Right ventricle myocardium inferior (tissue), 1 donor: ENCODE measurements at regions of chr5 and their contacts with region 1.

Region 1: GRCh38 chr5:149268928-149269557 is 2.6 kb upstream of the AFAP1L1 start:
- DNase-seq: no peak
- ATAC-seq: no peak

Region 2: DNA sequence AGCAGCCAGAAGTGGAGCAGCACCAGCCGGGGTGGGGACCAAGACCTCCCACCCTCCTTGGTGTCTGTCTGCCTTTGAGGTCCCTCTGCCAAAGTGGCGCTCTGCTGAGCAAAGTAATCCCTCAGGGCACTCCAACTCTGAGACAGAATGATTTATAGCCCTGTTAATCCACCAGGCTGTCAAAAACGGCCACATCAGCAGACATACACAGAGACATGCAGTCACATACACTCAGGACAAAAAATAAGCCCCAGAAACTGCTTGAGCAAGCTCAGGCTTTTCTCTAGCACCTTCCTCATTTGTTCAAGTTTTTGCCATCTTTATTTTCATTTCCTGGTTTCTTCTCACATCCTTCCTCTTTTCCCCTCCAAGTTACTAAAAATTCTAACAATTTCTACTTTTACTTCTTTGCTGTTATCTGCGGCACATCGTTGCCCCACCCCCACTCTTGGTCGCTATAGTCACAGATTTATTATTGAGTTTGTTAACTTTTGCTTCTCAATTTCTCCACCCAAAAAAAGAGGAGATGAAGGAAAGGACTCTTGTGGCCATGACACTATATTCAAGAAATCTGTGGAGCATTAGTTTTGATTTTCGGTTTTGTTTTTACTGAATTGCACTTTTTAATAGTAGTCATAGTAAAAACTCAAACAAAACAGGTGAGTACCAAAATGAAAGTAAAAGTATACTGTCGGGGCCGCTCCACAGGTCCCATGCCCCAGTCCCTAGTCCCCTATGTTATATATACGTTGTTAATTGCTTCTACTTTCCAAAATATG is 460.0 kb before region 1 on chr5:
- intact Hi-C with region 1: no loop called
- DNase-seq: peak; percentile 73
- ATAC-seq: peak; percentile 45

Region 3: DNA sequence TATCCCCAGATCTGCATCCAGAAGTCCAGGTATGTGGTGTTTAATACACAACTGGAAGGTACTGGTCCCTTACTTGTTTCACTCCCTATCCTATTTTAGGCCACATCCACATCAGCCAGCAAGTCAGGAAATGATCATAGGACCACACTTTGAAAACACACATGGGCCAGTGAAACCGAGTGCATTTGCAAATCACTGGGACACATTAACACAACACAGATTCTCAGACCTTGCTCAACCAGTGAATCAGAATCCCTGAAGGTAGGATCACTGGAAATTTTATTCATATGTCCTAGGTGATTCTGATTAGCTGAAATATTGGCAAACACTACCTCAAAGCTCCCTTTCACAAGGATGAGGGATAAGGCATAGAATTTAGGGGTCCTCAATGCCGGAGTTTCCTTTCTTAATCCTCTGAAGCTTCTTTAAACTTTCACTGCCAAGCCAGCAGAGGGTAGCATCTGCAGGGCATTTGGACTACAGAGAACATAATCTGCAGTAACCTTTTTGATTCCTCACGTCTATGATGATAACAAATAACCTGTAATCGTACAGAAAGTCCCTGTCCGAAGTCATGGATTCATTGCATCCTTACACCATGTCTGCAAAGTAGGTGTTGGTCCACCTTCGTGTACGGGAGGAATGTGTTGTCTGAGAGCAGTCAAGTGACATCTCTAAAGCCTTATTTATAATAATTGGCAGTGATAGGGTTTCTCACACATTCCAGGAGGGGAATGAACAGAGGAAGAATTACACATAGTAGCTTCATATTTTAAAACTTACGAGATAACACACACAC is 138.7 kb before region 1 on chr5:
- intact Hi-C with region 1: loop called (anchors 1 kb)
- DNase-seq: no peak
- ATAC-seq: peak; percentile 30

Region 4: DNA sequence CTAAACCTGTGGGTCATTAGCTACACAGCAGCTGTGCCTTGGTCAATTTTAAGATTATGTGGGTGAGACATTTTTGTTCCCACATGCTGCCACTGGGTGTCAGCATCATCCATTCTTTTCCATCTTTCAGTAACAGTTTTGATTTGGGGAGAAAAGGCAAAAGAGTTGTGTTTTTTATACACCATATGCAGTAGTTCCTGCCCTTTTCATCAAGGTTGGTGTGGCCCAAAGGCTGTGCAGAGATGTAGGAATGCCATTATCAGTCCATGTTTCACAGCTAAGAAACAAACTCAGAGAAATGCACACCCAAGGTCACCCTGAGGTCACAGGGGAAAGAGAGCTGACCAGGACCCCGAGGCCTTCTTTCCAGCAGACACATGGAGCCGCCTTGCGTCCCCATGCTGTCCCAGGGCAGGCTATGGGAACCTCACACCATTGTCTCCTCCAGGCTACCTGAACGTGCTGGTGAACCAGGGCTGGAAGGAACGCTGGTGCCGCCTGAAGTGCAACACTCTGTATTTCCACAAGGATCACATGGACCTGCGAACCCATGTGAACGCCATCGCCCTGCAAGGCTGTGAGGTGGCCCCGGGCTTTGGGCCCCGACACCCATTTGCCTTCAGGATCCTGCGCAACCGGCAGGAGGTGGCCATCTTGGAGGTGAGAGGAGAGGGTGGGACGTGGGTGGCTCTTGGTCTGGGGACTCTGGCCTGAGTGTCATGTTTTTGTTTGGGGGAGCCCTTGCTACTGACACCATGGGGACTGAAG is 48.4 kb after region 1 on chr5:
- intact Hi-C with region 1: loop called (anchors 1 kb)
- DNase-seq: no peak
- ATAC-seq: no peak

Region 5: DNA sequence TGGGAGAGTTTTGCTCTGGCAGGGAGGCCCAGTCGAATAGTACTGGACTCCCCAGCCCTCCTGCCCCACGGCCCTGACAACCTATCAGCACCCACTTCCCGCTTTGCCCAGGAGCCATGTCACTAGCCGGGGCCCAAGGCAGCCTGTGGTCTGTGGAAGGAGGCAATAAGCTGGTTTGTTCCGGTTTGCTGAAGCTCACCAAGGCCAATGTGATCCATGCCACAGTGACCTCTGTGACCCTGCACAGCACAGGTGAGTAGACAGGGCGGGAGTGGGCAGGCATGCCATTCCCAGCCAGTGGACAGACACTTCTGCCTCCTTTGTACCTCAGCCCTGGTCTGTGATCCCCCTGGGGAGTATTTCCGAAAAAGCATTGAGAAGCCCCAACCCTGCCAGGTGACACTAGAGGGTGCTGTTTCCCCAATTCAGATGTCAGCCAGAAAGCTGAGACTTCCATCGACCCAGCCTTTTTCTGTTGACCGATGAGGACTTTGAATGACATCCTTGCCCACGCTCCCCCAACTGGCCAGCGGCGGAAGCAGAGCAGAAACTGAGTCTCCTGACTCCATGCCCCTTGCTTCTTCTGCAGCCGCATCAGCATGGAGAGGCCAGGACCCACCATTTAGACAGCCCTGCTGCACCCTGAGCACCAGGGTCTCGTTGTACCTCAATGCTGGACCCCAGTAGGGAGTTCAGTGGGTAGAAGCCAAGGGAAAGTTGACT is 98.4 kb after region 1 on chr5:
- intact Hi-C with region 1: loop called (anchors 1 kb)
- DNase-seq: no peak
- ATAC-seq: peak; percentile 48

Region 6: GRCh38 chr5:149442563-149443182 is 173.6 kb after region 1 on chr5:
- intact Hi-C with region 1: loop called (anchors 5 kb)
- DNase-seq: peak; percentile 90
- ATAC-seq: peak; percentile 83

Region 7: DNA sequence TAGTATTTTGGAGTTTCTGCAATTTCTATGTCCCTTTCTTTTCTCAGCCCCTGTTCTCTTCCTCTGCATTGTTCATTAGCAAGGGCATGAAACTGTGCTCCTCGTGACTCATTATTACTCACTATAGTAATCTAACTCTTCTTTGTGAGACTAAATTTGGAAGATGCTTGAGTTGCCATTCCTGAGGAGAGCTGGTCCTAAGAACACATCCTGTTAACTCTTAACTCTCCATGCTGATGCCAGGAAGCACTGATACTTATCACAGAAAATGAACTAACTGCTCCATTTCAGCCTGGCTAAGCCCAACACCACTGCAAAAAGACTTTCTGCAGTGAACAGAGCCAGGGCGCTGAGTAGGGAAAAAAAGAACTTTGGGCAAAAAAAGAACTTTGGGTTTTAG is 292.8 kb after region 1 on chr5:
- intact Hi-C with region 1: loop called (anchors 10 kb)
- DNase-seq: no peak
- ATAC-seq: peak; percentile 88